Endothelial cell of umbilical vein (primary cell): ENCODE measurements at regions of chr18 and their contacts with region 1.

Region 1: GRCh38 chr18:22563098-22563707 is 145.5 kb upstream of the CTAGE1 start:
- DNase-seq: peak; percentile 95
- H3K4me3 ChIP-seq: peak overlapping the region in 2 of 3 experiments; percentile 3 to 47
- H3K27ac ChIP-seq: peak overlapping the region; percentile 59
- H3K4me1 ChIP-seq: peaks cover 41% of the 10 kb centered on the region
- H3K27me3 ChIP-seq: no peaks in the 10 kb centered on the region
- CTCF ChIP-seq: peak; percentile 60 to 68
- POLR2A ChIP-seq: no peak

Region 2: DNA sequence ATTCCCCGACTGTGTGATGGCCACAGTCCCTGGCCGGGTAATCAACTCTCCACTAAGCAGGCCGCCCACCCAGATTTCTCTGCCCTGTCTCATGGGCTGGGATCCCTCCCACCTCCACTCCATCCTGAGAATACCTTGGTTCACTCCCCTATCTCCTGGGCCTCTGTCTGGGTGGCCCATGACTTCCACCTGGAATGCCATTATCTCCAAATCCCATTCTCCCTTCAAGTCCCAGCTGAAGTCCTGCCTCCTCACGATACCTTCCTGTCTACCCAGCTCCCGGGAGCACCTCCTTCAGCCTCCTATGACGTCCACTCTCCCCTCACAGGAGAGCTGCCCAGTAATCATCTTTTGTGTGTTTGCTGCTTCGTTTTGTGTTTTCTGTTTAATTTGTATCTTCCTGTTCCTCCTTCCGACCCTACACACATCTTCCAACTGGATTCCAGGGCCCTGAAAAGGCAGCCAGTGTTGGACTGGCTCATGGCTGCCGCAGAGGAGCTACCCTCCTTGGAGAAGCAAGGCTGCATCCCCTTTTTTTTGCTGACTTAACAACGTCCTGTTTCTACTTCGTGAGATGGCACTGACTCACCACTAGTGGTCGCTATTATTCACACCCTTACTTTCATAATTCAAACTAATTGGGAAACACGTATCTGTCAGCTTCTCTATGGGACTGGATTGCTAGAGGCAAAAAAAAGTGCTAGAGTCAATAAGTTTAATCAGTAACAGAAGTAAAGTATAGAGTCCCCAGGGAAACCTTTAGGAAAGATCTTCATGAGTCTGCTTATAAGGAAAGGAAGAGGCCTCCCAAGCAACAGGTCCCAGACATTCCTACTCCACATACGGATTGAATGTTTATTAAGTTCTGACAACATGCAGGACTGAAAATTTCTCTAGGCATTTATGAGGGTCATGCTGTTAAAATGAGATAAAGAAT is 565.7 kb before region 1 on chr18:
- CTCF ChIA-PET with region 1: interaction called, 42 read pairs
- POLR2A ChIA-PET with region 1: no interaction called
- dilution Hi-C with region 1: no loop called
- intact Hi-C with region 1: loop called (anchors 1 kb)
- DNase-seq: peak; percentile 68
- H3K4me3 ChIP-seq: no peak overlapping the region
- H3K27ac ChIP-seq: no peak overlapping the region
- H3K4me1 ChIP-seq: no peaks in the 10 kb centered on the region
- H3K27me3 ChIP-seq: peaks cover 0 to 2% of the 10 kb centered on the region in 2 experiments
- CTCF ChIP-seq: peak; percentile 70 to 74
- POLR2A ChIP-seq: no peak

Region 3: GRCh38 chr18:22185273-22185672 is 377.9 kb before region 1 on chr18:
- CTCF ChIA-PET with region 1: interaction called, 17 read pairs
- POLR2A ChIA-PET with region 1: no interaction called
- dilution Hi-C with region 1: no loop called
- intact Hi-C with region 1: loop called (anchors 5 kb)
- DNase-seq: peak; percentile 21
- H3K4me3 ChIP-seq: no peak overlapping the region
- H3K27ac ChIP-seq: no peak overlapping the region
- H3K4me1 ChIP-seq: peaks cover 62% of the 10 kb centered on the region
- H3K27me3 ChIP-seq: no peaks in the 10 kb centered on the region
- CTCF ChIP-seq: peak in 1 of 2 donors; percentile 26
- POLR2A ChIP-seq: no peak

Region 4: DNA sequence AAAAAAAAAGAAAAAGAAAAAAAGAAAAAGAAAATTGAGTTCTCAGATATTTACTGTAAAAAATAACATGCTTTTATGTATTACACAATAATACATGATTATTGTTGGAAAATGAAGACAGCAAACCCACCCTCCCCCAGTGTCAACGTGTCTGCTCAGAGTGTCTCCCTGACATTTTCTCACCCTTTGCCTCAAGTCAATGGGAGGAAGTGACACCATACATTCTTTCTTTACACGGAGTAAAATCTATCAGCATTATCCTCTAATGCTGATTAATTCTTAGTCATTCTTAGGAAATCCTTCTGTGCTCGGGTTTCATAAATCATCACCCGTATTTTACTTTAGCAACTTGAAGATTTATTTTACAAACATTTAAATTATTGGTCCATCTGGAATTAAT is 177.5 kb before region 1 on chr18:
- CTCF ChIA-PET with region 1: interaction called, 3 read pairs
- POLR2A ChIA-PET with region 1: no interaction called
- dilution Hi-C with region 1: no loop called
- intact Hi-C with region 1: loop called (anchors 1 kb)
- DNase-seq: peak; percentile 93
- H3K4me3 ChIP-seq: peak overlapping the region in 1 of 3 experiments; percentile 18
- H3K27ac ChIP-seq: peak overlapping the region; percentile 84
- H3K4me1 ChIP-seq: peaks cover 14% of the 10 kb centered on the region
- H3K27me3 ChIP-seq: no peaks in the 10 kb centered on the region
- CTCF ChIP-seq: no peak
- POLR2A ChIP-seq: no peak

Region 5: DNA sequence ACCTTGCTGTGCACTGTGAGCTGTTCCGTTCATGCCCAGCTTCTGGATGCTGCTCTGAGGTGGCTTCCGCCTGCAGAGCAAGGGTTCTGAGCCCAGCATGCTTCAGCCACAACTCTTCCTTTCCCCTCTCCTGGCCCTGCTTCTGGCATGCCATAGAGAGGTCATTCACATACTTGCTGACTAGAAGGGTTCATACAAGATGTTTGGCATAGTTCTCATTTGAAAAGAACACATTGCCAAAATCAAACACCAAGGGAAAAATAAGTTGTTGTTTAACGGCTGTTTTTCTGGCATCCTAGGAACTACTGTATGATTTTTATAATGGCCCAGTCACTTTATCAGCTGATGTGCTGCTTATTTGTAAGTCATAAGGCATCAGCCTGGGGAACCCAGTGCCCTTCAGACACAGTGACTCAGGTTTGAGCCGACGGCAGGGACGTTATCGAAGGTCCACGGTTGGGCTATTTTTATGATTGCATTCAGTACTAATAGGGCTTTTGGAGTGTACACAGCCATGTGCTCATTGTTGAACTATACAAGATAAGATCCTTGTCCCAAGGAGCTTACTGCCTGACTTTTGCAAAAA is 91.6 kb before region 1 on chr18:
- CTCF ChIA-PET with region 1: interaction called, 10 read pairs
- POLR2A ChIA-PET with region 1: no interaction called
- dilution Hi-C with region 1: no loop called
- intact Hi-C with region 1: loop called (anchors 1 kb)
- DNase-seq: peak; percentile 84
- H3K4me3 ChIP-seq: no peak overlapping the region
- H3K27ac ChIP-seq: peak overlapping the region; percentile 97
- H3K4me1 ChIP-seq: peaks cover 54% of the 10 kb centered on the region
- H3K27me3 ChIP-seq: no peaks in the 10 kb centered on the region
- CTCF ChIP-seq: no peak
- POLR2A ChIP-seq: peak; percentile 19

Region 6: DNA sequence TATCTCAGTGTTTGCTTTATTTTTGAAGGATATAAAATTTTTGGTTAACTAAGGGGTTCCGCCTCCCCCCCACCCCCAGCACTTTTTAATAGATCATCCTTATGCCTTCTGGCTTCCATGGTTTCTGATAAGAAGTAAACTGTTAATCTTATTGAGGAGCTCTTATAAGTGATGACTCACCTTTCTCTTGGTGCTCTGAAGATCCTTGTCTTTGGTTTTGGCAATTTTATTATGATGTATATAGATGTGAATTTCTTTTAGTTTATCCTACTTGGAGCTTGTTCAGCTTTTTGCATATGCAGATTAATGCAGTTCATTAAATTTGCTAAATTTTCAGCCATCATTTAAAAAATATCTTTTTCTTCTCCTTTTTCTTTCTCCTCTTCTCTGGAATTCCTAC is 53.8 kb before region 1 on chr18:
- CTCF ChIA-PET with region 1: no interaction called
- POLR2A ChIA-PET with region 1: no interaction called
- dilution Hi-C with region 1: no loop called
- intact Hi-C with region 1: no loop called
- DNase-seq: no peak
- H3K4me3 ChIP-seq: no peak overlapping the region
- H3K27ac ChIP-seq: no peak overlapping the region
- H3K4me1 ChIP-seq: peaks cover 8% of the 10 kb centered on the region
- H3K27me3 ChIP-seq: no peaks in the 10 kb centered on the region
- CTCF ChIP-seq: no peak
- POLR2A ChIP-seq: no peak

Region 7: GRCh38 chr18:22625406-22625805 is 62.2 kb after region 1 on chr18:
- CTCF ChIA-PET with region 1: no interaction called
- POLR2A ChIA-PET with region 1: no interaction called
- dilution Hi-C with region 1: no loop called
- intact Hi-C with region 1: no loop called
- DNase-seq: no peak
- H3K4me3 ChIP-seq: no peak overlapping the region
- H3K27ac ChIP-seq: no peak overlapping the region
- H3K4me1 ChIP-seq: no peaks in the 10 kb centered on the region
- H3K27me3 ChIP-seq: peaks cover 2 to 7% of the 10 kb centered on the region in 2 experiments
- CTCF ChIP-seq: no peak
- POLR2A ChIP-seq: no peak

Region 8: DNA sequence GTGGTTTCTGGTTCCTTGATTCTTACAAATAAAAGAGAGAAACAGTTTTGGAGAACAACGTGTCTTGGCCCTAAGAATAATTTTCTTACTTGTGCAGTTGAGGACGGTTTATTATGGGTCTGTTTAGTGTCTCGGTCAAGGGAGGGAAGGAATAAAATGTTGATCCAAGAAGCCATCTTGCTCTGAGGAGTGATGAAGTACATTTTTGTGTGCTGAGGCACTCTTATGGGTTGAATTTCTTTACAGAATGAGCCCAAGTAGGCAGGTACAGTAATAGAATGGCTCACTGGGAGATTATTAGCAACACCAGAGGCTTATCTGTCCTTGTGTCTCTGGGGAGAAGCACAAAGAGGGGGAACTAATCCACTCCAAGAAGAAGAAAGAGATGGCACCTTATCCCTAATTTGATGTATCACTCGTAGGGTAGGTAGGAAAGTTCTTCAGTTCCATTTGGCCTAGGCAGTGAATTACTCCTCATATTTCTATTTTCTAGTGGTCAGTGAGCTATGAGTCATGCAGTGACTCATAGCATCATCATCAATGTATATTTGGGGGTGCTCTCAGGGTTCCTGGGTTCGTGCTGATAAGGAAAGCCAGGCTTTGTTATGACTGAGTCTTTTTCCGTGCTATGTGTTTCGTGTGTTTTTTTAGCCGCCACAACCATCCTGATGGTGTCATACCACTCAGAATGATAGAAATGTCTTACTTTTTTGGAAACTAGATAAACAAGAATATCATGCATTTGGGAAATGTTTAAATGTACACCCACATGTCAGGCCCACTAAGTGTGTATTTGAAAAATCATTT is 104.6 kb after region 1 on chr18:
- CTCF ChIA-PET with region 1: interaction called, 5 read pairs
- POLR2A ChIA-PET with region 1: no interaction called
- dilution Hi-C with region 1: no loop called
- intact Hi-C with region 1: loop called (anchors 2 kb)
- DNase-seq: peak; percentile 96
- H3K4me3 ChIP-seq: no peak overlapping the region
- H3K27ac ChIP-seq: peak overlapping the region; percentile 79
- H3K4me1 ChIP-seq: peaks cover 37% of the 10 kb centered on the region
- H3K27me3 ChIP-seq: no peaks in the 10 kb centered on the region
- CTCF ChIP-seq: no peak
- POLR2A ChIP-seq: peak; percentile 49

Region 9: GRCh38 chr18:22778996-22779395 is 215.8 kb after region 1 on chr18:
- CTCF ChIA-PET with region 1: no interaction called
- POLR2A ChIA-PET with region 1: no interaction called
- dilution Hi-C with region 1: no loop called
- intact Hi-C with region 1: no loop called
- DNase-seq: no peak
- H3K4me3 ChIP-seq: no peak overlapping the region
- H3K27ac ChIP-seq: no peak overlapping the region
- H3K4me1 ChIP-seq: no peaks in the 10 kb centered on the region
- H3K27me3 ChIP-seq: peaks cover 24 to 41% of the 10 kb centered on the region in 2 experiments
- CTCF ChIP-seq: no peak
- POLR2A ChIP-seq: no peak